ENCODE measurements at regions of chr10 and their contacts with region 1.

Region 1: GRCh38 chr10:43105102-43105785 is 28.4 kb downstream of the RET start:
- DNase-seq: peak; percentile 70 to 81
- ATAC-seq: peak; percentile 87 to 96
- H3K4me3 ChIP-seq: peak overlapping the region; percentile 61
- H3K27ac ChIP-seq: peak overlapping the region; percentile 69 to 86
- H3K4me1 ChIP-seq: no peaks in the 10 kb centered on the region
- CTCF ChIP-seq: peak; percentile 97
- EP300 ChIP-seq: no peak
- POLR2A ChIP-seq: no peak
- RAD21 ChIP-seq: peak; percentile 89 to 98

Region 2: DNA sequence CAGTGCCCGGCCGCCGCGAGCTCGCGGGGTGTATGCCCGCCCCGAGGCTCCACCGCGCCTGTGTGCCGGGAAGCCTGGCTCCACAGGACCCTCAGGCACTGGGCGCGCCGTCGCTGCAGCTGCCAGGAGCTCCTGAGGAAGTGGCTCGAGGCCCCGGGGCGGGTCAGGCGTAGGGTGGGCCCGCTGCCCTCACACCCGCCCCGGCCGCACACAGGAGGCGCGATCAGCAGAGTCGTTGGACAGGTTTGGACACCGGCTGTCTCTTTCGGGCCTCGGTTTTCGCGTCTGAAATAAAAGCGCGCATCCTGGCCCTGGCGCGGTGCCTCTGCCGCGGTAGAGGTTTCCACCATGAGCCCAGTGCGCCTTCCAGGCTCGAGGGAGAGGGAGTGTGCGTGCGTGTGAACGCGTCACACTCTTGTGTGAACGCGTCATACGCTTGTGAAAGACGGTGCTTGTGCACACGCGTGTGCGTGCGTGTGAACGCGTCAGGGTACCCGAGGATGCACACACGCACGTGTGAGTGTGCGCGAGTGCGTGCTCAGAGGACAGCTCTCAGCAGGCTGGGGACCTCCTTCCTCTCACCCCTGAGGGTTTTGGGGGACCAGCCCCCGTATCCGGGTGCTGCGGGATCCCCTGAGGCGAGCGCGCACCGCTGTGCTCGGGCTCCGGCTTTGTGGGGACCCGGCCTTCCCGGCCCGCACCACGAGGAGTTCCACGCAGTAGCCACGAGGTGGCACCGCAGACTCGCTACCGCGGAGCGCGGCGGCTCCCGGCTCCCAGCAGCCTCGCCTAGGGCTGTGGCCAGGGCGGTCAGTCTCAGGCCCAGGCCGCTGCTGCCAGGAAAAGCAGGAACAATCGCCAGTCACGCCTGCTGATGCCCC is 238.9 kb before region 1 on chr10:
- CTCF ChIA-PET with region 1: interaction called, 38 read pairs
- POLR2A ChIA-PET with region 1: no interaction called
- DNase-seq: peak; percentile 64 to 67
- ATAC-seq: peak; percentile 99 to 100
- H3K4me3 ChIP-seq: peak overlapping the region; percentile 36
- H3K27ac ChIP-seq: no peak overlapping the region
- H3K4me1 ChIP-seq: no peaks in the 10 kb centered on the region
- CTCF ChIP-seq: peak; percentile 61
- EP300 ChIP-seq: no peak
- POLR2A ChIP-seq: no peak
- RAD21 ChIP-seq: peak; percentile 69 to 83

Region 3: GRCh38 chr10:42943025-42943818 is 162.0 kb before region 1 on chr10:
- CTCF ChIA-PET with region 1: no interaction called
- POLR2A ChIA-PET with region 1: no interaction called
- DNase-seq: no peak
- ATAC-seq: no peak
- H3K4me3 ChIP-seq: no peak overlapping the region
- H3K27ac ChIP-seq: no peak overlapping the region
- H3K4me1 ChIP-seq: no peaks in the 10 kb centered on the region
- CTCF ChIP-seq: no peak
- EP300 ChIP-seq: no peak
- POLR2A ChIP-seq: no peak
- RAD21 ChIP-seq: no peak

Region 4: DNA sequence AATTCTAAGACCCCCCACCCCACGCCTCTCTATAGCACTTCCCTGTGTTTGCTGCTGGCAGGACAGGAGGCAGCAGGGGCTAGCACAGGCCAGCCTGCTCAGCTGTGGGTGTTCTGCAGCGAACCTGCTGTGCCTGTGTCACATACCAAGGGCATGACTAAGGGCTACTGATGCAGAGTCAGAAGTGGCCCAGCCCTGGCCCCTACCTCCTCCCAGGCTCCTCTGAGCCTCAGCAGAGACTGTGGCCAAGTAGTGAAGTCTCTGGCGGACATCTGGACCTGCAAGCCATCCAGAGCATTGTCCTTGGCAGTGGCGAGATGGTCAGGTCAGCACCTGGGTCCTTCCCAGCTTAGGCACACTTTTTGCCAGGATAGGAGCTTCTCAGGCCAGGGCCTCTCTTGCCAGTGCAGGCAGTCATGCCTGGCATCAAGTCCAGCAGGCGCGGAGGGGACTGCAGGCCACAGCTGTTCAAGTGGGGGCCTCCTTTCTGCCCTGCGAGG is 144.7 kb before region 1 on chr10:
- CTCF ChIA-PET with region 1: no interaction called
- POLR2A ChIA-PET with region 1: no interaction called
- DNase-seq: peak in 1 of 2 experiments; percentile 11
- ATAC-seq: peak; percentile 73 to 83; a peak in 5 of 6 replicates
- H3K4me3 ChIP-seq: no peak overlapping the region
- H3K27ac ChIP-seq: no peak overlapping the region
- H3K4me1 ChIP-seq: no peaks in the 10 kb centered on the region
- CTCF ChIP-seq: no peak
- EP300 ChIP-seq: no peak
- POLR2A ChIP-seq: no peak
- RAD21 ChIP-seq: no peak

Region 5: GRCh38 chr10:43013065-43013464 is 92.2 kb before region 1 on chr10:
- CTCF ChIA-PET with region 1: no interaction called
- POLR2A ChIA-PET with region 1: no interaction called
- DNase-seq: no peak
- ATAC-seq: no peak
- H3K4me3 ChIP-seq: no peak overlapping the region
- H3K27ac ChIP-seq: no peak overlapping the region
- H3K4me1 ChIP-seq: no peaks in the 10 kb centered on the region
- CTCF ChIP-seq: no peak
- EP300 ChIP-seq: no peak
- POLR2A ChIP-seq: no peak
- RAD21 ChIP-seq: no peak

Region 6: GRCh38 chr10:43078987-43079275 is 26.3 kb before region 1 on chr10:
- CTCF ChIA-PET with region 1: interaction called, 11 read pairs
- POLR2A ChIA-PET with region 1: no interaction called
- DNase-seq: peak; percentile 41 to 57
- ATAC-seq: peak; percentile 25 to 70; a peak in 3 of 6 replicates
- H3K4me3 ChIP-seq: no peak overlapping the region
- H3K27ac ChIP-seq: no peak overlapping the region
- H3K4me1 ChIP-seq: 0 out of 3 replicates have a peak, but pooled peaks cover 3% of the 10 kb centered on the region
- CTCF ChIP-seq: peak; percentile 47
- EP300 ChIP-seq: no peak
- POLR2A ChIP-seq: no peak
- RAD21 ChIP-seq: peak; percentile 47 to 57; a peak in 4 of 5 replicates

Region 7: GRCh38 chr10:43093423-43094076 is 11.7 kb before region 1 on chr10:
- CTCF ChIA-PET with region 1: interaction called, 20 read pairs
- POLR2A ChIA-PET with region 1: no interaction called
- DNase-seq: peak in 1 of 2 experiments; percentile 24
- ATAC-seq: peak; percentile 77 to 80
- H3K4me3 ChIP-seq: no peak overlapping the region
- H3K27ac ChIP-seq: no peak overlapping the region
- H3K4me1 ChIP-seq: no peaks in the 10 kb centered on the region
- CTCF ChIP-seq: no peak
- EP300 ChIP-seq: no peak
- POLR2A ChIP-seq: no peak
- RAD21 ChIP-seq: peak in 1 of 2 experiments; percentile 24; a peak in 2 of 5 replicates